H1 (cell line): ENCODE measurements at regions of chr6 and their contacts with region 1.

Region 1: GRCh38 chr6:105077596-105078385 is 102.0 kb downstream of the POPDC3 start:
- DNase-seq: no peak
- H3K4me3 ChIP-seq: no peak overlapping the region
- H3K27ac ChIP-seq: no peak overlapping the region
- H3K4me1 ChIP-seq: no peaks in the 10 kb centered on the region
- H3K27me3 ChIP-seq: no peaks in the 10 kb centered on the region
- CTCF ChIP-seq: peak in 2 of 3 experiments; percentile 24 to 31; a peak in 2 of 4 replicates
- EP300 ChIP-seq: no peak
- POLR2A ChIP-seq: no peak
- RAD21 ChIP-seq: peak; percentile 63 to 74

Region 2: DNA sequence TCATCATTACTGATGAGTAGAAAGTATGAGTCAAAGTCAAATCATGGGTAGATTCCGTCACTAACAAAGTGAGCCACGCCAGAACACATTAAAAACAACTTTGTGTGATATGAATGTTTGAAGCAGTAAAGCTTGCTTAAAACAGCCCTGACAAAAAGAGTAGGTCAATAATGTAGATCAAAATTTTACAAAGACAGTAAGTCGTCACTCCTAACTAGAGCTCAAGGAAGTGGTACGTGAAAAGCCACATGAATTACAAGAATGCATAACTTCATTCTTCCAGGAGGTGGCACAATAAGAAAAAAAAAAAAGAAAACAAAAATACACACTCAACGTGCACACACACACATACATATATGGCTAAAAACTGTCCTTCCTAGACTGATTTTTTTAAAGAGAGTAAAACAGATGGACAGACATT is 288.0 kb before region 1 on chr6:
- CTCF ChIA-PET with region 1: interaction called, 12 read pairs
- POLR2A ChIA-PET with region 1: interaction called, 3 read pairs
- DNase-seq: no peak
- H3K4me3 ChIP-seq: no peak overlapping the region
- H3K27ac ChIP-seq: no peak overlapping the region
- H3K4me1 ChIP-seq: no peaks in the 10 kb centered on the region; a peak in 1 of 7 replicates
- H3K27me3 ChIP-seq: no peaks in the 10 kb centered on the region
- CTCF ChIP-seq: peak in 1 of 3 experiments; percentile 18; a peak in 1 of 4 replicates
- EP300 ChIP-seq: no peak
- POLR2A ChIP-seq: no peak
- RAD21 ChIP-seq: peak; percentile 25 to 31; a peak in 3 of 4 replicates

Region 3: GRCh38 chr6:104859225-104860146 is 218.3 kb before region 1 on chr6 and contains the start of gene HACE1:
- CTCF ChIA-PET with region 1: interaction called, 12 read pairs
- POLR2A ChIA-PET with region 1: no interaction called
- DNase-seq: peak; percentile 74 to 95
- H3K4me3 ChIP-seq: peak within 1 kb of the TSS; percentile 84 to 98 (median 88)
- H3K27ac ChIP-seq: no peak within 1 kb of the TSS
- H3K4me1 ChIP-seq: no peaks in the 10 kb centered on the region; a peak in 1 of 7 replicates
- H3K27me3 ChIP-seq: no peaks in the 10 kb centered on the region
- CTCF ChIP-seq: peak; percentile 12 to 32 (median 18); a peak in 3 of 4 replicates
- EP300 ChIP-seq: no peak
- POLR2A ChIP-seq: peak in 1 of 2 experiments; percentile 75; a peak in 2 of 3 replicates
- RAD21 ChIP-seq: peak; percentile 1 to 30; a peak in 1 of 4 replicates
- total RNA-seq, gene HACE1: 21.3 and 21.6 TPM in 2 replicates

Region 4: GRCh38 chr6:104940881-104941728 is 136.7 kb before region 1 on chr6:
- CTCF ChIA-PET with region 1: interaction called, 27 read pairs
- POLR2A ChIA-PET with region 1: interaction called, 12 read pairs
- DNase-seq: peak in 1 of 2 experiments; percentile 89
- H3K4me3 ChIP-seq: peak overlapping the region; percentile 52 to 95 (median 74)
- H3K27ac ChIP-seq: peak overlapping the region; percentile 87
- H3K4me1 ChIP-seq: peaks cover 0 to 9% (median 4%) of the 10 kb centered on the region in 4 experiments; a peak in 3 of 7 replicates
- H3K27me3 ChIP-seq: no peaks in the 10 kb centered on the region
- CTCF ChIP-seq: peak; percentile 71 to 90 (median 75)
- EP300 ChIP-seq: 0 out of 3 replicates have a peak, but pooled peaks of 1 of the 2 experiments have one; percentile 20
- POLR2A ChIP-seq: peak in 1 of 2 experiments; percentile 33; a peak in 2 of 3 replicates
- RAD21 ChIP-seq: peak; percentile 79 to 80

Region 5: GRCh38 chr6:104969785-104970581 is 107.8 kb before region 1 on chr6:
- CTCF ChIA-PET with region 1: interaction called, 11 read pairs
- POLR2A ChIA-PET with region 1: interaction called, 3 read pairs
- DNase-seq: no peak
- H3K4me3 ChIP-seq: peak overlapping the region in 1 of 4 experiments; percentile 21; a peak in 1 of 8 replicates
- H3K27ac ChIP-seq: no peak overlapping the region
- H3K4me1 ChIP-seq: peaks cover 0 to 11% (median 5%) of the 10 kb centered on the region in 4 experiments; a peak in 5 of 7 replicates
- H3K27me3 ChIP-seq: no peaks in the 10 kb centered on the region
- CTCF ChIP-seq: no peak
- EP300 ChIP-seq: no peak
- POLR2A ChIP-seq: no peak
- RAD21 ChIP-seq: no peak

Region 6: GRCh38 chr6:105038259-105038658 is 39.5 kb before region 1 on chr6:
- CTCF ChIA-PET with region 1: interaction called, 10 read pairs
- POLR2A ChIA-PET with region 1: no interaction called
- DNase-seq: no peak
- H3K4me3 ChIP-seq: no peak overlapping the region
- H3K27ac ChIP-seq: no peak overlapping the region
- H3K4me1 ChIP-seq: peaks cover 0 to 15% (median 4%) of the 10 kb centered on the region in 4 experiments; a peak in 2 of 7 replicates
- H3K27me3 ChIP-seq: no peaks in the 10 kb centered on the region
- CTCF ChIP-seq: no peak
- EP300 ChIP-seq: no peak
- POLR2A ChIP-seq: no peak
- RAD21 ChIP-seq: peak; percentile 32 to 47

Region 7: DNA sequence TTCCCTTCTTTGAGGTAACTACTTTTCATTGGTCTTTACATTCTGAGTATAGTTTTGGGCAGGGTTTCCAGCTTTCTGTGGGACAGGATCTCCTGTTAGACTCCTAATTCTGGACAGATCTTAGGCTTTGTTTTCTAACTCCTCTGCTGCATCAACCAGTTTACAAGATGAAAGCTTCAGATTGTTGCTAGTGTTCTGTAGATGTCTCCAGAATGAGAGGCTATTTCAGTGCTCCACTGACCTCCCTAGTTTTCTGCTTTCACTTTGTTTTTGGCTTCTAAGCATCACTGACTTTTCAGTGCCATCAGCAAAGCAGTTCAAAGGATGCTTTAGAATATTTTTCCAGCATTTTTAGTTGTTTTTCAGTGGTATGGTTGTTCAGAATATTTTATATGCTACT is 19.5 kb before region 1 on chr6:
- CTCF ChIA-PET with region 1: no interaction called
- POLR2A ChIA-PET with region 1: no interaction called
- DNase-seq: no peak
- H3K4me3 ChIP-seq: no peak overlapping the region
- H3K27ac ChIP-seq: no peak overlapping the region
- H3K4me1 ChIP-seq: peaks cover 0 to 5% (median 3%) of the 10 kb centered on the region in 4 experiments; a peak in 3 of 7 replicates
- H3K27me3 ChIP-seq: no peaks in the 10 kb centered on the region
- CTCF ChIP-seq: no peak
- EP300 ChIP-seq: no peak
- POLR2A ChIP-seq: no peak
- RAD21 ChIP-seq: no peak